Thyroid gland (tissue), 4 donors: ENCODE measurements at regions of chr3 and their contacts with region 1.

Region 1: DNA sequence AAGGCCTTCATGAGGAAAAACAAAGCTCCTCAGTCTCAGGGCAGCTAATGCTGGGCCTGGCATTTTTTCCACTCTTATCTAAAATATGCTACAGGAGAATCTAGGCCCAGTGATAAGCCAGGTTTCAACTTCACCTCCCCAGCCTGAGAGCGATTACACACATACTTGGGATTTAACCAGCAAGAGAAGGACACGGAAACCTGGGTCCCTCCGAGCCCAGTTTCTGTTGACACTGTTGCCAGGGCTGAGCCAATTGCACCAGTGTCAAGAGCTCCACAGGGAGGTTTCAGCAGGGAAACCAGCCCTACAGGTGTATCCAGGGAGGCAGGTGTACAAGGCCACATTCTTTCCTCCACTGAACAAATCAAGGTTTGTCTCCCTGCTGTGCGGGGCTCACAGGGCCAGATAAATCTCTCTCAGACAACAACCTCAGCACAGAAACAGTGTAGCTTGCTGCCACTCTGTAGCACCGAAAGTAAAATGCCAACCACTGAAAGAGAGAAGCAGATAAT is 85.4 kb downstream of the MAGI1 start:
- DNase-seq: peak; percentile 94 to 96
- H3K4me3 ChIP-seq: no peak overlapping the region
- H3K27ac ChIP-seq: peak overlapping the region; percentile 95 to 98 (median 97)
- H3K4me1 ChIP-seq: peaks cover 55 to 56% of the 10 kb centered on the region in 2 donors
- H3K27me3 ChIP-seq: no peaks in the 10 kb centered on the region
- CTCF ChIP-seq: peak in 1 of 6 experiments; percentile 15
- POLR2A ChIP-seq: peak in 1 of 2 donors; percentile 75

Region 2: GRCh38 chr3:65811086-65811761 is 142.1 kb before region 1 on chr3:
- intact Hi-C with region 1: no loop called
- DNase-seq: peak in 1 of 2 donors; percentile 20
- H3K4me3 ChIP-seq: no peak overlapping the region
- H3K27ac ChIP-seq: no peak overlapping the region
- H3K4me1 ChIP-seq: peaks cover 9 to 15% of the 10 kb centered on the region in 2 donors
- H3K27me3 ChIP-seq: no peaks in the 10 kb centered on the region
- CTCF ChIP-seq: no peak
- POLR2A ChIP-seq: no peak

Region 3: DNA sequence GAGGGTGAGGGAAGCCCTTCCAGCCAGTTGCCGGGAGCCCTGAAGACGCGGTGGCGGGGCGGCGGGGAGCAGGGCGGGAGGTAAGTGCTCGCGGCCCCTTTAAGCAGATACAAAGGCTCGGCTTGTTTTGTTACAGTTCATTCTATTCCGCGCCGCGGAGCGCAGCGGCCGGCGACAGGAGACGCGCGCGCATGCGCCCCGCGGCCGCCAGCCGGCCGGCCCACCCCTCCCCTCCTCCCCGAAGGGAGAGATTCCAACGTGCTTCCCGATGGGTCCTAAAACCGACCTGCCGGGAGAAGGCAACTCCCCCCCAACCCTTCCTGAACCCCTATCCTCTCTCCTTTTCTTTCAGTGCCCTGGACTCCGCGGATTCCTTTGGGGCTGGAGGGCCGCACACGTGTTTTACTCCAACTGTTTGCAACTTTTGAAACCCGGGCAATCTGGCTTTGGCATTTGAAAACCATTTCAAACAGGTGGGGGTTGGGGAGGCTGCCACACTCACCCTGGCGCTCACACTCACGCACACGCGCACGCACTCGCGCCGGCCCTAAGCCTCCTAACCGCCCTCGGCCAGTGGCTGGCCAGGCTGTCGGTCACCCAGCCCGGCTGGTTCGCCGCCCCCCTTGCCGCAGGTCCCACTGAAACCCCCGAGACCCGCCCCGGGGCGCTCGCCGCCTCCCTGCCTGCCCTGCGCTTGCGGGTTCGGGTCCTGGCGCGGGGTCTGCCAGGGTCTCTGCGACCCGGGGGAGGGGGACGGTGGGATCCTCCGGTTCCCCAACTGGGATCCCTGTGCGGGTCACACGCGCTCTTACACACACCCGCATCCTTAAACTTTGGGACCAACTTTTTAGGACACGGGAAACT is 85.6 kb after region 1 on chr3 and contains the start of gene MAGI1:
- intact Hi-C with region 1: loop called (anchors 10 kb)
- DNase-seq: peak; percentile 94
- H3K4me3 ChIP-seq: peak within 1 kb of the TSS; percentile 43 to 82 (median 78)
- H3K27ac ChIP-seq: peak within 1 kb of the TSS; percentile 95 to 97 (median 96)
- H3K4me1 ChIP-seq: peaks cover 9 to 19% of the 10 kb centered on the region in 2 donors
- H3K27me3 ChIP-seq: no peaks in the 10 kb centered on the region
- CTCF ChIP-seq: peak in 1 of 6 experiments; percentile 13
- POLR2A ChIP-seq: peak; percentile 68 to 85
- total RNA-seq, gene MAGI1: 60.5 to 123 (median 87.5) TPM